Ovary (tissue), 10 donors: ENCODE measurements at regions of chr14 and their contacts with region 1.

Region 1: GRCh38 chr14:50101417-50101816 is 15.0 kb downstream of the VCPKMT start:
- DNase-seq: no peak
- H3K4me3 ChIP-seq: no peak overlapping the region
- H3K27ac ChIP-seq: no peak overlapping the region
- H3K4me1 ChIP-seq: no peaks in the 10 kb centered on the region
- H3K27me3 ChIP-seq: no peaks in the 10 kb centered on the region
- CTCF ChIP-seq: no peak
- EP300 ChIP-seq: no peak
- POLR2A ChIP-seq: no peak

Region 2: DNA sequence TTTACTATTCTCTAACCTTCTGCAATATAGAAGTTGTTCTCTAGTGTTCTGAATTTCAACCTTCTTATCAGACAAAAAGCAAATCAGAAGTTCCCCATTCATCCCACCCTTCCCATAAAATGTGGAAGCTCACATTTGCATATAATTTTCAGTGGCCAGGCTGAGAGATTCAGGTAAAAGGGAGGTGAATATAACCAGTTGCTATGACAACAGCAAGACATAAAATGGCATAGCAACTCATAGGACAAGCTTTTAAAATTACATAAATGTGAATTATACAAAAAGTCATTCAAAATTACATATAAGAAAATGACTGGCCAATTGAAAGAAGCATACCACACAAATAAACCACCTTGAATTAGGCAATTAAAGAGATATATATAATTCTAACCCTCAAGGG is 874.4 kb before region 1 on chr14:
- intact Hi-C with region 1: no loop called
- DNase-seq: no peak
- H3K4me3 ChIP-seq: no peak overlapping the region
- H3K27ac ChIP-seq: no peak overlapping the region
- H3K4me1 ChIP-seq: no peaks in the 10 kb centered on the region
- H3K27me3 ChIP-seq: no peaks in the 10 kb centered on the region
- CTCF ChIP-seq: no peak
- EP300 ChIP-seq: no peak
- POLR2A ChIP-seq: no peak

Region 3: GRCh38 chr14:49867831-49868723 is 233.3 kb before region 1 on chr14:
- intact Hi-C with region 1: loop called in 3 of 4 experiments (anchors 5 to 10 kb)
- DNase-seq: peak; percentile 94 to 97 (median 96)
- H3K4me3 ChIP-seq: peak overlapping the region; percentile 69
- H3K27ac ChIP-seq: peak overlapping the region in 1 of 2 donors; percentile 64
- H3K4me1 ChIP-seq: peaks cover 2% of the 10 kb centered on the region
- H3K27me3 ChIP-seq: no peaks in the 10 kb centered on the region
- CTCF ChIP-seq: no peak
- EP300 ChIP-seq: no peak
- POLR2A ChIP-seq: peak; percentile 68

Region 4: GRCh38 chr14:50249136-50249800 is 147.9 kb after region 1 on chr14:
- intact Hi-C with region 1: no loop called
- DNase-seq: no peak
- H3K4me3 ChIP-seq: no peak overlapping the region
- H3K27ac ChIP-seq: no peak overlapping the region
- H3K4me1 ChIP-seq: no peaks in the 10 kb centered on the region
- H3K27me3 ChIP-seq: no peaks in the 10 kb centered on the region
- CTCF ChIP-seq: no peak
- EP300 ChIP-seq: no peak
- POLR2A ChIP-seq: no peak

Region 5: GRCh38 chr14:50542941-50543418 is 441.6 kb after region 1 on chr14:
- intact Hi-C with region 1: no loop called
- DNase-seq: no peak
- H3K4me3 ChIP-seq: no peak overlapping the region
- H3K27ac ChIP-seq: no peak overlapping the region
- H3K4me1 ChIP-seq: no peaks in the 10 kb centered on the region
- H3K27me3 ChIP-seq: no peaks in the 10 kb centered on the region
- CTCF ChIP-seq: peak in 1 of 3 donors; percentile 16
- EP300 ChIP-seq: no peak
- POLR2A ChIP-seq: no peak